ENCODE measurements at regions of chr10 and their contacts with region 1.

Region 1: DNA sequence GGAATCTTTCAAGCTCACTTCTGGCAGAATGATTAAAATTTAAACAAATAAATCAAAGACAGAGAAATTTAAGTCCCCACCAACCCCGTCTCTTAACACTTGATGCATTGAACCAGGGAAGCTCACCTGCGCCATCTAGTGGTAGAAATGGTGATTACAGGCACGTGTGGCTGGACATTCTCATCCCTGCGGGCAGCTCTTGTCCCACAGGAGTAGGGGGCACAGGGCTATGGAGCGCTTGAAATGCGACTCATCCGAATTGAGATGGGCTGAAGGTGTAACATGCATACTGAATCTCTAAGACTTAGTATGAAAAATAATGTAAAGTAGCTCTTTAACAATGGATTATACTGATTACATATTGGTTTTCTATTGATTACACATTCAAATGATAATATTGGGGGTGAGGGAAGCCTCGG is 24.8 kb upstream of the SLIT1 start:
- DNase-seq: peak in 1 of 2 donors; percentile 82
- H3K4me3 ChIP-seq: no peak overlapping the region
- H3K27ac ChIP-seq: no peak overlapping the region
- H3K4me1 ChIP-seq: no peaks in the 10 kb centered on the region
- H3K27me3 ChIP-seq: no peaks in the 10 kb centered on the region
- CTCF ChIP-seq: peak; percentile 71 to 96 (median 94)

Region 2: GRCh38 chr10:97072851-97073665 is 137.5 kb before region 1 on chr10:
- intact Hi-C with region 1: loop called (anchors 1 kb)
- DNase-seq: peak; percentile 24 to 86
- H3K4me3 ChIP-seq: no peak overlapping the region
- H3K27ac ChIP-seq: no peak overlapping the region
- H3K4me1 ChIP-seq: no peaks in the 10 kb centered on the region
- H3K27me3 ChIP-seq: no peaks in the 10 kb centered on the region
- CTCF ChIP-seq: peak; percentile 61 to 90 (median 89)

Region 3: GRCh38 chr10:97243836-97244235 is 33.3 kb after region 1 on chr10:
- intact Hi-C with region 1: no loop called
- DNase-seq: no peak
- H3K4me3 ChIP-seq: no peak overlapping the region
- H3K27ac ChIP-seq: no peak overlapping the region
- H3K4me1 ChIP-seq: no peaks in the 10 kb centered on the region
- H3K27me3 ChIP-seq: no peaks in the 10 kb centered on the region
- CTCF ChIP-seq: no peak

Measured in ascending aorta (tissue), 2 donors.